ENCODE measurements at regions of chr1 and their contacts with region 1.

Region 1: DNA sequence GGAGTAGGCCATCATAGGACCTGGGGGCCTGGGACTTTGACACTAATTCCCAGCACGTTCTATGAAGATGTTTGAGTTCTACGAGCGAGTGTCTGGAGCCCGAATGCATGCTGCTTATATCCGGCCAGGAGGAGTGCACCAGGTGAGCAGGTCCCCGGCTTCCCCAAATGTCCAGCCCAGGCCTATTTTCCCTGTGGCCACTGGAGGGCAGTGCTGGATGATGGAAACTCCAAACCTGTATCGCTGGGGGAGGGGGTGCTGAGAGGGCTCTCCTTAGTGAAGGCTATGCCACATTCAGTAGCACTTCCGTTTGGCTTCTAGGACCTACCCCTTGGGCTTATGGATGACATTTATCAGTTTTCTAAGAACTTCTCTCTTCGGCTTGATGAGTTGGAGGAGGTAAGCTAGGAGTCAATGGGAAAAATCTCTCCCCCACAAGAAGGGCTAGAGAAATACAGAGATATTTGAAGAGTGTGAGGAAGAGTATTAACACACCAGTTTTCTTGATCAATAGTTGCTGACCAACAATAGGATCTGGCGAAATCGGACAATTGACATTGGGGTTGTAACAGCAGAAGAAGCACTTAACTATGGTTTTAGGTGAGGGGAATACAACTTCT is 5.2 kb upstream of the FCER1G start:
- DNase-seq: peak; percentile 52
- ATAC-seq: peak; percentile 97
- H3K4me3 Mint-ChIP-seq: no peak overlapping the region
- H3K27ac Mint-ChIP-seq: no peak overlapping the region
- H3K4me1 Mint-ChIP-seq: peaks cover 9% of the 10 kb centered on the region
- H3K27me3 Mint-ChIP-seq: no peaks in the 10 kb centered on the region
- CTCF ChIP-seq: no peak

Region 2: DNA sequence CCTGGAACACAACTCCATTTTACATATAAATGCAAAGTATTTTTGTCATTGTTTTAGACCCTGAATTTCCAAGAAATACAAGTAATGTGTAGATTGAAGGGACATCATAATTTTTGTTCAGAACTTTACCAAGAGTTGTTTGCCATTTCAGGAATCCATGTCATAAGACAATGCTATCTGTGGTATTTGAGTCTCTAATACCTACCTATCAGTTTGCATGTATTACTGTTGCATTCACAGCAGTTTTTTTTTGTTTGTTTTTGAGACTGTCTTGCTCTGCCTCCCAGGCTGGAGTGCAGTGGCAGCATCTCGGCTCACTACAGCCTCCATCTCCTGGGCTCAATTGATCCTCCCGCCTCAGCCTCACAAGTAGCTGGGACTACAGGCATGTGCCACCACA is 82.7 kb after region 1 on chr1:
- CTCF ChIA-PET with region 1: interaction called, 8 read pairs
- POLR2A ChIA-PET with region 1: no interaction called
- intact Hi-C with region 1: loop called (anchors 1 kb)
- DNase-seq: no peak
- ATAC-seq: no peak
- H3K4me3 Mint-ChIP-seq: no peak overlapping the region
- H3K27ac Mint-ChIP-seq: no peak overlapping the region
- H3K4me1 Mint-ChIP-seq: peaks cover 6% of the 10 kb centered on the region
- H3K27me3 Mint-ChIP-seq: no peaks in the 10 kb centered on the region
- CTCF ChIP-seq: no peak

Region 3: GRCh38 chr1:161382214-161383019 is 172.5 kb after region 1 on chr1:
- CTCF ChIA-PET with region 1: interaction called, 12 read pairs
- POLR2A ChIA-PET with region 1: no interaction called
- intact Hi-C with region 1: loop called (anchors 1 kb)
- DNase-seq: no peak
- ATAC-seq: peak; percentile 90
- H3K4me3 Mint-ChIP-seq: no peak overlapping the region
- H3K27ac Mint-ChIP-seq: no peak overlapping the region
- H3K4me1 Mint-ChIP-seq: peaks cover 7% of the 10 kb centered on the region
- H3K27me3 Mint-ChIP-seq: no peaks in the 10 kb centered on the region
- CTCF ChIP-seq: no peak